CD4-positive, alpha-beta memory T cell (primary cell): ENCODE measurements at regions of chr3 and their contacts with region 1.

Region 1: DNA sequence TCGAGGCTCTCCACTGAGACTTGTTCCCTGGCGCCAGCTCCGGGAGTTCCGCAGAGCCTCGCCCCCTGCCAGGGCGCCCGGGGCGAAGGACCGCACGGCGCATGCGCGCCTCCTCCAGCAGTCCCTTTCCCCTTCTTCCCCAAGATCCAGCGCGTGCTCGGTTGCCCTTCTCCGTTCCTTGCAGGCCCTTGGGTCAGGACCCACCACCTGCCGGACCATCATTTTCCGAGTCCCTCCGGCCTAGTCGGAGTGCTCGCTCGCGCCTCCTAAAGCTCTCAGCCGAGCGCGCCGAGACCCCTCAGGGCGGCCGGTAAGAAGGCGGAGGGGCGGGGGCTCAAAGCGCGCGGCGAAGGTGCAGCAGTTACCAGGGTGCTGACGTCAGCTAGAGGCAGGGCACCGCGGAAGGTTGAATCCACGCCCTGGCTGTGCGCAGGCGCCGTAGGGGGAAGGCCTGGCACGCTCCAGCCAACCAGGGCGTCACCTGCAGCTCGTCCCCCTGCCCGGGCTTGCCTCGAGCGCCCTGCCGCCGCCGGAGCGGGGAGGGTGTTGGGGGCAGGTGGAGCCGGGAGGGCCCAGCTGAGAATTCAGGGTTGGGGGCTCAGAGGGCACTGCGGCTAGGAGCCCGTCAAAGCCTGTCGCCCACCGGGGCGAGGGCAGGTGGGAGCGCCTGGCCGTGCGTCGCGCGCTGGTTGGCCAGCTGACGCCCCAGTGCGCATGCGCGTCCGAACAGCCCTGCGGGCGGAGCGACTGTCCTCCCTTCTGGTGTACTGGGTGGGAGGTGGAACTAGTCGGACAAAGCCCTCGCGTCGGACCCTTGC is at the start of gene TCAIM:
- DNase-seq: peak; percentile 99 to 100 (median 100)
- H3K4me3 ChIP-seq: peak within 1 kb of the TSS; percentile 91
- H3K4me3 Mint-ChIP-seq: peak within 1 kb of the TSS; percentile 93 to 98 (median 98)
- H3K27ac ChIP-seq: peak within 1 kb of the TSS; percentile 95
- H3K27ac Mint-ChIP-seq: peak within 1 kb of the TSS; percentile 94 to 99 (median 99)
- H3K4me1 ChIP-seq: peaks cover 19% of the 10 kb centered on the region
- H3K4me1 Mint-ChIP-seq: peaks cover 20 to 36% (median 24%) of the 10 kb centered on the region in 4 donors
- H3K27me3 ChIP-seq: no peaks in the 10 kb centered on the region
- H3K27me3 Mint-ChIP-seq: peaks cover 0 to 10% of the 10 kb centered on the region in 2 donors
- total RNA-seq, gene TCAIM: 21.3 to 21.8 TPM

Region 2: GRCh38 chr3:43621656-43622432 is 716.4 kb before region 1 on chr3 and contains the start of gene ANO10:
- CTCF ChIA-PET with region 1: no interaction called
- POLR2A ChIA-PET with region 1: interaction called, 4 read pairs
- intact Hi-C with region 1: loop called (anchors 5 kb)
- DNase-seq: peak; percentile 91 to 93 (median 93)
- H3K4me3 ChIP-seq: peak within 1 kb of the TSS; percentile 36 to 59
- H3K4me3 Mint-ChIP-seq: peak within 1 kb of the TSS; percentile 88 to 94 (median 91)
- H3K27ac ChIP-seq: peak within 1 kb of the TSS; percentile 54
- H3K27ac Mint-ChIP-seq: peak within 1 kb of the TSS; percentile 77 to 96 (median 91)
- H3K4me1 ChIP-seq: peaks cover 12% of the 10 kb centered on the region
- H3K4me1 Mint-ChIP-seq: peaks cover 10 to 24% (median 13%) of the 10 kb centered on the region in 4 donors
- H3K27me3 ChIP-seq: no peaks in the 10 kb centered on the region
- H3K27me3 Mint-ChIP-seq: no peaks in the 10 kb centered on the region
- total RNA-seq, gene ANO10: 9.7 to 9.9 TPM

Region 3: DNA sequence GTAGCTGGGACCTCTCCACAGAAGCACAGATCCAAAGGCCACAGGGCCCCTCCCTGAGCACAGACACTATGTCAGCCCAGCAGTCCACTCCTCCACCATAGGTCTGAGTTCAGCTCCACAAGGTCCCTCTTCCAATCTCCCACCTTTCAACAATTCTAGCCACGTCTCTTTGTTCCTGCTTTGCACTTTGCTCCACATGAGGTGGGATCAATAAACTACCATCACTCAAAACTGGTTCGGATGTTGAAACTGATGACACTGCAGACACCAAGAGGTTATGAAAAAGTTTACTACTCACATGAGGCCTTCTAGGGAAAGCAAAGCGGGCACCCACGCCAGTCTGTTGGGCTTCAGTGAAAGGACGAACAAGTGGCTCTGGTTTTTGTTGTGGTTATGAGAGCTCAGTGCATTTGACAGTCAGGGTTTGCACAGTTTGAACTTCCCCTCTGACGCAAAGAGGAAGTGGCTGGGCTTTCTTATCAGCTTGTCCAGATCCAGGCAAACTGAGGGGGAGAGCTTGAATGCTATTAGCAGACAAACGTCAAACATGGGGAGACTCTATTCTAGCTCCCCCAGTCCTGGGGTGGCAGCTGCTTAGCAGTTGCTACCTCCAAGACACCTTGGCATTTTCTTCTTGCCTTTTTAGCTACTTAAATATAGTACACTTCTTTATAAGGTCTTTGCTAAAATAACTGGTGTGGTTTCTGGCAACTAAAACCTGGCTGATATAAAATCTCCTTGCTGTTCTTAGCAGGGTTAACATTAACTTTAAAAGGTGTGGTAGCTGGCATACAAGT is 101.5 kb after region 1 on chr3:
- CTCF ChIA-PET with region 1: no interaction called
- POLR2A ChIA-PET with region 1: interaction called, 11 read pairs
- intact Hi-C with region 1: no loop called
- DNase-seq: peak; percentile 79 to 84 (median 81)
- H3K4me3 ChIP-seq: peak overlapping the region; percentile 13 to 18
- H3K4me3 Mint-ChIP-seq: peak overlapping the region; percentile 66 to 84 (median 75)
- H3K27ac ChIP-seq: peak overlapping the region; percentile 47
- H3K27ac Mint-ChIP-seq: peak overlapping the region; percentile 86 to 99 (median 97)
- H3K4me1 ChIP-seq: peaks cover 33% of the 10 kb centered on the region
- H3K4me1 Mint-ChIP-seq: peaks cover 22 to 44% (median 31%) of the 10 kb centered on the region in 4 donors
- H3K27me3 ChIP-seq: no peaks in the 10 kb centered on the region
- H3K27me3 Mint-ChIP-seq: no peaks in the 10 kb centered on the region

Region 4: DNA sequence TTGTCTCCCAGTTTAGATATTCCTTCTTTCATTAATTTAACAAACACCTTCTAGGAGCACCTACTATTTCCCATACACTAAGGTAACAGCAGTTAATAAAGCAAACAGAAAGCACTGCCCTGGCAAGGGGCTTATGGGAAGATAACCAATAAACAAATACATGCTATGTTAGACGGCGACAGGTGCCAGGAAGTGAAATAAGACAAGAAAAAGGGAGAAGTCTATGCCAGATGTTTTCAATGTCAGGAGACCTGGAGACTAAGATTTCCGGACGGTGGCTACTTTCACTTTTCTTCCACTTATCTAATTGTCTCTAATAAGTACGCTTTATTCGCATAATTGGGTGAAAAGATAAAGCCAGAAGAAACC is 171.8 kb after region 1 on chr3:
- CTCF ChIA-PET with region 1: interaction called, 4 read pairs
- POLR2A ChIA-PET with region 1: interaction called, 30 read pairs
- intact Hi-C with region 1: loop called (anchors 1 kb)
- DNase-seq: no peak
- H3K4me3 ChIP-seq: peak overlapping the region; percentile 85 to 92
- H3K4me3 Mint-ChIP-seq: peak overlapping the region; percentile 94 to 98 (median 96)
- H3K27ac ChIP-seq: peak overlapping the region; percentile 75
- H3K27ac Mint-ChIP-seq: peak overlapping the region; percentile 84 to 97 (median 94)
- H3K4me1 ChIP-seq: peaks cover 21% of the 10 kb centered on the region
- H3K4me1 Mint-ChIP-seq: peaks cover 28 to 50% (median 38%) of the 10 kb centered on the region in 4 donors
- H3K27me3 ChIP-seq: no peaks in the 10 kb centered on the region
- H3K27me3 Mint-ChIP-seq: no peaks in the 10 kb centered on the region

Region 5: DNA sequence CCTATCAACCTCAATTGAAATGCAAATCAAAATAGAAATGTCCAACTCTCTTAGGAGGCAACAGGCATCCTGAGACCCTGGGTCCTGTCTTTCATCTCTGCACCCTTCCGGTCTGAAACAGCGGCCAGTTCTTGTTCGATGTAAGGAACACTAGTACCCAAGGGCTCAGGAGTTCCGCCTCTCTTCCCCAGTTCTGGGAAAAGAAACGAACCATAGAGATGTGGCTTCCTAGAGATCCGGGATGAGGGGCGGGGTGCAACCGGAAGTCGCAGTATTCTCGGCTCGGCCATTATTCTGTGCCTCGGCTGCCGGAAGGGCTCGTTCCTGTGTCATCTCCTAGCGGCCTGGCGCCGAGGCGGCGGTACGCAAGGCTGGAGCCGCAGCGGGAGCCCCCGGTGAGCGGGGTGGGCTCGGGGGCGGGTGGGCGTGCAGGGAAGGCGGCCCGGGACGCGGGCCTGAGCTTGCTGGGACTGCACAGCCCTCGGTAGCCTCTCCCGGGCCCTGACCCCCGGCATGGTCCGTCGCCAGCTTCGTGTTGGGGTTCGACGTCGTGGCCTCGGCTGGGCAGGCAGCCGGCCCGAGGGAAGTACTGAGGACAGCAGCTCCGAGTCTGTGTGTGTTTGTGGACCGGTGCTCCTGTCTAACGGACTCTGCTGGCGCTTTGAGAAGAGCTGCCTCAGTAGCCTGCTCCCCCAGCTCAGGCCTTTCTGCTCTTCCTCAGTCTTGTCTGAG is 286.7 kb after region 1 on chr3 and contains the start of gene ZNF197:
- CTCF ChIA-PET with region 1: no interaction called
- POLR2A ChIA-PET with region 1: interaction called, 4 read pairs
- intact Hi-C with region 1: loop called (anchors 10 kb)
- DNase-seq: peak; percentile 23 to 44 (median 42)
- H3K4me3 ChIP-seq: peak within 1 kb of the TSS; percentile 47 to 59
- H3K4me3 Mint-ChIP-seq: peak within 1 kb of the TSS; percentile 90 to 95 (median 92)
- H3K27ac ChIP-seq: peak within 1 kb of the TSS; percentile 49
- H3K27ac Mint-ChIP-seq: peak within 1 kb of the TSS; percentile 74 to 92 (median 87)
- H3K4me1 ChIP-seq: peaks cover 21% of the 10 kb centered on the region
- H3K4me1 Mint-ChIP-seq: peaks cover 20 to 47% (median 27%) of the 10 kb centered on the region in 4 donors
- H3K27me3 ChIP-seq: no peaks in the 10 kb centered on the region
- H3K27me3 Mint-ChIP-seq: no peaks in the 10 kb centered on the region
- total RNA-seq, gene ZNF197: 18.0 to 18.4 TPM

Region 6: DNA sequence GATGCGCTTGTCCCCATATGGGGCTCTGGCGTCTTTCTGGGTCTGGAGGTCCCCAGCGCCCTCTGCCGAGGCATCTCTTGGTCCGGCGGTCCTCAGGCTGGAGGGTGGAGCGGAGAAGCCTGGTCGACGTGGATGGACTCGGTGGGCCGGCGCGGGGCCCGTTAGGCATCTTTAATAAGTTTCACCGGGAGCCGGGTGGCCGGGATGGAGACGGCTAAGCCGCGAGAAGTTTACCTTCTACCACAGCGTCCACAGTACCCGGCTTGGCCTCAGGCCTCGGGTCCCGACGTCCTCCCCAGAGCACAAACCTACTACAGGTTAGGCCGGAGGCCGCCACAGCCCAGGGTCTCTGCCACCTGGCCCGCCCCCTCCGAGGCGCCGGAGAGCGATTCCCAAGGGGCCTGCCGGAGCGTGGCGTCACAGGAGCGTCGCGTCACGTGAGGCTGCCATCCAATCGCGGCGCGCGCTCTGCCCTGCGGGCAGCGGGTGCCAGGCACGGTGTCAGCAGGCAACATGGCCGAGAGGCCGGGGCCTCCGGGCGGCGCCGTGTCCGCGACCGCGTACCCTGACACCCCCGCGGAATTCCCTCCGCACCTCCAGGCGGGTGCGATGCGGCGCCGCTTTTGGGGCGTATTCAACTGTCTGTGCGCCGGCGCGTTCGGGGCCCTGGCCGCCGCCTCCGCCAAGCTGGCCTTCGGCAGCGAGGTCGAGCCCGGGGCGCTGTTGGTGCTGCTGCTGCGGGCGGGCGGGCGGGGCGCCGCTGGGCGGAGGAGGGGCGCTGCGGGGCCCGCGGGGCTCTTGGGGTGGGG is 523.4 kb after region 1 on chr3 and contains the start of gene TMEM42:
- CTCF ChIA-PET with region 1: no interaction called
- POLR2A ChIA-PET with region 1: interaction called, 7 read pairs
- intact Hi-C with region 1: loop called (anchors 5 kb)
- DNase-seq: peak; percentile 84 to 91 (median 88)
- H3K4me3 ChIP-seq: peak within 1 kb of the TSS; percentile 46 to 85
- H3K4me3 Mint-ChIP-seq: peak within 1 kb of the TSS; percentile 88 to 93 (median 90)
- H3K27ac ChIP-seq: peak within 1 kb of the TSS; percentile 88
- H3K27ac Mint-ChIP-seq: peak within 1 kb of the TSS; percentile 90 to 98 (median 94)
- H3K4me1 ChIP-seq: peaks cover 38% of the 10 kb centered on the region
- H3K4me1 Mint-ChIP-seq: peaks cover 19 to 47% (median 36%) of the 10 kb centered on the region in 4 donors
- H3K27me3 ChIP-seq: no peaks in the 10 kb centered on the region
- H3K27me3 Mint-ChIP-seq: no peaks in the 10 kb centered on the region
- total RNA-seq, gene TMEM42: 26.1 to 29.6 TPM